Natural killer cell (primary cell): ENCODE measurements at regions of chr13 and their contacts with region 1.

Region 1: DNA sequence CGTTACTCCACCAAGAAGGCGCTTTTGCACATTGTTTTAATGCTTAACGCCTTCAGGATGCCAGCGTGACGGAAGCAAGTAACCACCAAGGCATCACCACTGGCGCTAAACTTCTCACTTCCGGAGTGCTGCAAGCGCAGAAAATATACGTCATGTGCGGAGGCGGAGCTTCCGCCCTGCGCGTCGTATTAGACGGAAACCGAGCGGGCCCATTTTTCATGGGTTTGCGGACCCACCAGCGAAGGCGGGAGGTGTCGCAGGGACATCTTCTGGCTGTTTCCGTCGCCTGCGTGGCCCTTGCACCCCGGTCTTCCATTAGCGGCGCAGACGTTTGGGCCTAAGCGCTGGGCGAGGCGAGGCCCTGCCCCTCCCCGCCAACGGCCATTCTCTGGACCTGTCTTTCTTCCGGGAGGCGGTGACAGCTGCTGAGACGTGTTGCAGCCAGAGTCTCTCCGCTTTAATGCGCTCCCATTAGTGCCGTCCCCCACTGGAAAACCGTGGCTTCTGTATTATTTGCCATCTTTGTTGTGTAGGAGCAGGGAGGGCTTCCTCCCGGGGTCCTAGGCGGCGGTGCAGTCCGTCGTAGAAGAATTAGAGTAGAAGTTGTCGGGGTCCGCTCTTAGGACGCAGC is at the start of gene ERCC5:
- DNase-seq: peak; percentile 97 to 99
- ATAC-seq: peak; percentile 75 to 90 (median 81)
- H3K4me3 ChIP-seq: peak within 1 kb of the TSS; percentile 96
- H3K4me3 Mint-ChIP-seq: peak within 1 kb of the TSS; percentile 99
- H3K27ac ChIP-seq: peak within 1 kb of the TSS; percentile 98
- H3K27ac Mint-ChIP-seq: peak within 1 kb of the TSS; percentile 96 to 98
- H3K4me1 ChIP-seq: peaks cover 20% of the 10 kb centered on the region
- H3K4me1 Mint-ChIP-seq: peaks cover 41 to 42% of the 10 kb centered on the region in 2 donors
- H3K27me3 ChIP-seq: no peaks in the 10 kb centered on the region
- H3K27me3 Mint-ChIP-seq: no peaks in the 10 kb centered on the region
- CTCF ChIP-seq: no peak
- total RNA-seq, gene ERCC5: 110 to 127 (median 126) TPM

Region 2: GRCh38 chr13:102580552-102581169 is 265.1 kb before region 1 on chr13:
- intact Hi-C with region 1: loop called (anchors 1 kb)
- DNase-seq: peak in 1 of 2 donors; percentile 84
- ATAC-seq: peak; percentile 76 to 89 (median 82)
- H3K4me3 ChIP-seq: no peak overlapping the region
- H3K4me3 Mint-ChIP-seq: no peak overlapping the region
- H3K27ac ChIP-seq: no peak overlapping the region
- H3K27ac Mint-ChIP-seq: no peak overlapping the region
- H3K4me1 ChIP-seq: peaks cover 4% of the 10 kb centered on the region
- H3K4me1 Mint-ChIP-seq: peaks cover 8 to 15% of the 10 kb centered on the region in 2 donors
- H3K27me3 ChIP-seq: no peaks in the 10 kb centered on the region
- H3K27me3 Mint-ChIP-seq: peaks cover 5 to 6% of the 10 kb centered on the region in 2 donors
- CTCF ChIP-seq: peak; percentile 92

Region 3: DNA sequence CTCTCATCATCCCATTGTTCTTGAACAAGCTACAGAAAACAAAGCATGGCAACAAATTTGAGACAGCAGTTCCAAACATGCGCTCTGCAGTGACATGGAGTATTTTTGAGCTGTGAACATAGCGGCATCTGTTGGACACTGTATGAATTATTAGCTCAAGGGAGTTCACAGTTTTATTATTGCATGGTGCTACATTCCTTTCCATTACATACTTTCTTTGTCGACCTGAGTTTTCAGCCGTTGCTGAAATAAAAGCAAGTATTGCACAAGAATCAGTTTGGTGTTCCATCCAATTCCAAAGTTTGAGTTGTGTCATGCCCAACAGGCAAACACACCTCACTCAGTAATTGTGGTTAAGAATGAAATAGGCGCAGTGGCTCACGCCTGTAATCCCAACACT is 120.8 kb before region 1 on chr13:
- intact Hi-C with region 1: loop called (anchors 2 kb)
- DNase-seq: peak in 1 of 2 donors; percentile 40
- ATAC-seq: peak; percentile 56 to 59 (median 57)
- H3K4me3 ChIP-seq: no peak overlapping the region
- H3K4me3 Mint-ChIP-seq: no peak overlapping the region
- H3K27ac ChIP-seq: no peak overlapping the region
- H3K27ac Mint-ChIP-seq: no peak overlapping the region
- H3K4me1 ChIP-seq: peaks cover 9% of the 10 kb centered on the region
- H3K4me1 Mint-ChIP-seq: peaks cover 20 to 28% of the 10 kb centered on the region in 2 donors
- H3K27me3 ChIP-seq: no peaks in the 10 kb centered on the region
- H3K27me3 Mint-ChIP-seq: peaks cover 10 to 13% of the 10 kb centered on the region in 2 donors
- CTCF ChIP-seq: peak; percentile 12

Region 4: GRCh38 chr13:102773441-102774215 is 72.1 kb before region 1 on chr13 and contains the start of gene TEX30:
- intact Hi-C with region 1: loop called (anchors 1 kb)
- DNase-seq: peak; percentile 88 to 93
- ATAC-seq: peak; percentile 91 to 98 (median 92)
- H3K4me3 ChIP-seq: peak within 1 kb of the TSS; percentile 83
- H3K4me3 Mint-ChIP-seq: peak within 1 kb of the TSS; percentile 93
- H3K27ac ChIP-seq: peak within 1 kb of the TSS; percentile 86
- H3K27ac Mint-ChIP-seq: peak within 1 kb of the TSS; percentile 90 to 96
- H3K4me1 ChIP-seq: peaks cover 30% of the 10 kb centered on the region
- H3K4me1 Mint-ChIP-seq: peaks cover 38 to 46% of the 10 kb centered on the region in 2 donors
- H3K27me3 ChIP-seq: no peaks in the 10 kb centered on the region
- H3K27me3 Mint-ChIP-seq: no peaks in the 10 kb centered on the region
- CTCF ChIP-seq: no peak
- total RNA-seq, gene TEX30: 8.7 to 10.3 (median 9.3) TPM

Region 5: GRCh38 chr13:102800145-102801041 is 45.4 kb before region 1 on chr13:
- intact Hi-C with region 1: loop called (anchors 1 kb)
- DNase-seq: peak; percentile 82 to 87
- ATAC-seq: peak; percentile 85 to 91 (median 86)
- H3K4me3 ChIP-seq: peak overlapping the region; percentile 50
- H3K4me3 Mint-ChIP-seq: peak overlapping the region; percentile 96
- H3K27ac ChIP-seq: peak overlapping the region; percentile 47
- H3K27ac Mint-ChIP-seq: peak overlapping the region; percentile 79 to 88
- H3K4me1 ChIP-seq: peaks cover 21% of the 10 kb centered on the region
- H3K4me1 Mint-ChIP-seq: peaks cover 30 to 42% of the 10 kb centered on the region in 2 donors
- H3K27me3 ChIP-seq: peaks cover 2% of the 10 kb centered on the region
- H3K27me3 Mint-ChIP-seq: peaks cover 0 to 3% of the 10 kb centered on the region in 2 donors
- CTCF ChIP-seq: peak; percentile 82